ENCODE measurements at regions of chr10 and their contacts with region 1.

Region 1: DNA sequence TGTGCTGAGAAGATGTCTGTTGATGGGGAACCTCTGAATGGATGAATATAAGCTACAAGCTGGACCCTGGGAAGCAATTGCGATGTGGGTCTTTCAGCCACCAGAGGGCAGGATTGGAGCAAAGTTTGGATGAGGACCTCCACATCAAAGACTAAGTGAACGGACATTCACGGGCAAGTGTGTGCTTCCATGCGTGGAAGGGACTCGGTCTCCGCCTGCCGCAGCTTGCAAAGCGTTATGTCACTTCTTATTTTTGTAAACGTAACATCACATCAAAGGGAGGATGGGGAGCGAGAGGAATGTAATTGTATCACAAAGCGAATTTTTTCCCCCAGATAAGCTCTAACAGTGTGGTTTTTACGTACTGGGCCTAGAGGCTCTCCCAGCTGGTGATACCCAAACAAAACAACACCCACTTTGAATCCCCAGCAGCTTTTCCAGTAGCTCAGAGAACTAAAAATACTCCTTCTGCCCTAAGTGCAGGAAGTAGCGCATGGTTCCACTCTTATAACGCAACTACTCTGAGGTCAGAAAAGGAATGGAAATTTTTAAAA is 65.0 kb downstream of the VWA2 start:
- DNase-seq: peak; percentile 40
- H3K4me3 ChIP-seq: peak overlapping the region; percentile 23
- H3K27me3 ChIP-seq: peaks cover 2% of the 10 kb centered on the region; the same call in 1 of the 2 replicates
- CTCF ChIP-seq: peak; percentile 81

Region 2: DNA sequence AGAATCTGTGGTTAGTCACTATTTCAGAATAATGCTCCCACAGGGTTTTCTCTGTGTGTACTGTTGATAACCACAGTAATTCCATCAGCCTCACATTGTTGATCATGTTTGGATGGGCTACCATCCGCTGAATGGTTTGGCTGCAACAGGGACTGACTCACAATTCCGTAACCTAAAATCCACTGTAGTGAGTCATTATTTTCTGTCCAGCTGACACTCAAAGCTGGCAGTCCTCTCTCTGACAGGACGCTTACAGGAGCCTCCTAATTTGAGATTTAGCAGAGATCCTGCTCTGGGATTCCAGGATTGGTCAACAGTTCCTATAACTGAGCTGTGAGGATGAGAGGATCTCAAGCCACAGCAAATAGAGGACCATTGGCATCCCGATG is 32.3 kb before region 1 on chr10:
- CTCF ChIA-PET with region 1: interaction called, 11 read pairs
- POLR2A ChIA-PET with region 1: no interaction called
- DNase-seq: peak; percentile 87
- H3K4me3 ChIP-seq: no peak overlapping the region
- H3K27me3 ChIP-seq: peaks cover 3% of the 10 kb centered on the region
- CTCF ChIP-seq: no peak

Region 3: DNA sequence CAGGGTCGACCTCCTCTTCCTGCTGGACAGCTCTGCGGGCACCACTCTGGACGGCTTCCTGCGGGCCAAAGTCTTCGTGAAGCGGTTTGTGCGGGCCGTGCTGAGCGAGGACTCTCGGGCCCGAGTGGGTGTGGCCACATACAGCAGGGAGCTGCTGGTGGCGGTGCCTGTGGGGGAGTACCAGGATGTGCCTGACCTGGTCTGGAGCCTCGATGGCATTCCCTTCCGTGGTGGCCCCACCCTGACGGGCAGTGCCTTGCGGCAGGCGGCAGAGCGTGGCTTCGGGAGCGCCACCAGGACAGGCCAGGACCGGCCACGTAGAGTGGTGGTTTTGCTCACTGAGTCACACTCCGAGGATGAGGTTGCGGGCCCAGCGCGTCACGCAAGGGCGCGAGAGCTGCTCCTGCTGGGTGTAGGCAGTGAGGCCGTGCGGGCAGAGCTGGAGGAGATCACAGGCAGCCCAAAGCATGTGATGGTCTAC is 18.1 kb before region 1 on chr10:
- CTCF ChIA-PET with region 1: interaction called, 14 read pairs
- POLR2A ChIA-PET with region 1: no interaction called
- DNase-seq: no peak
- H3K4me3 ChIP-seq: no peak overlapping the region
- H3K27me3 ChIP-seq: peaks cover 3% of the 10 kb centered on the region
- CTCF ChIP-seq: no peak

Region 4: GRCh38 chr10:114432566-114433093 is 128.5 kb after region 1 on chr10:
- CTCF ChIA-PET with region 1: interaction called, 28 read pairs
- POLR2A ChIA-PET with region 1: no interaction called
- DNase-seq: no peak
- H3K4me3 ChIP-seq: no peak overlapping the region
- H3K27me3 ChIP-seq: 0 out of 2 replicates have a peak, but pooled peaks cover 1% of the 10 kb centered on the region
- CTCF ChIP-seq: no peak

Region 5: GRCh38 chr10:114470956-114471905 is 167.1 kb after region 1 on chr10:
- CTCF ChIA-PET with region 1: interaction called, 15 read pairs
- POLR2A ChIA-PET with region 1: no interaction called
- DNase-seq: no peak
- H3K4me3 ChIP-seq: no peak overlapping the region
- H3K27me3 ChIP-seq: no peaks in the 10 kb centered on the region
- CTCF ChIP-seq: peak; percentile 83